ENCODE measurements at regions of chr14 and their contacts with region 1.

Region 1: DNA sequence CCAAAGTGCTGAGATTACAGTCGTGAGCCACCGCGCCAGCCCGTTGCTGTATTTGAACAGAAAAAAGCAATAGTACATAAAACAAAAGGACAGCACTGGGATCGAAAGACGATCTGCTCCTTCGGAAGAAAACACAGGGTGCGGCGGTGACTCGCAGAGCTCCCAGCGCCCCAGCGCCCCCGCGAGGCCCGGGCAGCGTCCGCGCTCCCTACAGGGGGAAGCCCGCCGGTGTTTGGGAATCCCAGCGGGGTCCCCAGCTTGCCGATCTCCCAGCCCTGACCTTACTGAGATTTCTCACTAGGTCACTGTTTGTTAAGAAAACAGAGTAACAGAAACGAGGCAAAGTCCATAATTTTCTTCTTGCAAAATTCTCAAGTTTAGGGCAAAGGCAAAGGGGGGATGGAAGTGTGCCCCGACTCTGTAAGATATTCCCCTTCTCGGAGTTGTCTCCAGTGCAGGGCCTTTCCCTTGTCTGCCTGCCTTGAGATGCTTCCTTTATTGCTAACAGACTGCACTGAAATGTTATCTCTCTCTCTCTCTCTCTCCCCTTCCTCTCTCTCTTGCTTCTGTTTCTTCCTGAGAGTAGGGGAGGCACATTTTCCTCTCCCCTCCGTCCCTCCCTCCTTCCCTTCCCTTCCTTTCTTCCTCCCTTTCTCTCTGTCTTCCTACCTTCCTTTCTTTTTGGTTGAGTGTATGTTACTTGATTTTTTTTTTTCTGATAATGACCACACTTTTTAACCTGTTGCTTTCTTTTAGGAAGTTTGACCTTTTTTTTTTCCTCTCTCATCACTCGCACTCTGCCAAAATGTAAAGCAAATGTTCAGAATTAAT is 91.9 kb downstream of the TMEM30B start:
- DNase-seq: peak; percentile 64 to 78
- ATAC-seq: peak; percentile 67 to 75
- H3K4me3 ChIP-seq: peak overlapping the region; percentile 47 to 64 (median 58)
- H3K27ac ChIP-seq: peak overlapping the region; percentile 79 to 94 (median 91)
- H3K4me1 ChIP-seq: peaks cover 39 to 55% of the 10 kb centered on the region in 2 donors
- H3K27me3 ChIP-seq: no peaks in the 10 kb centered on the region
- CTCF ChIP-seq: peak in 4 of 5 experiments; percentile 51 to 73 (median 70)
- POLR2A ChIP-seq: peak in 1 of 2 donors; percentile 8

Region 2: DNA sequence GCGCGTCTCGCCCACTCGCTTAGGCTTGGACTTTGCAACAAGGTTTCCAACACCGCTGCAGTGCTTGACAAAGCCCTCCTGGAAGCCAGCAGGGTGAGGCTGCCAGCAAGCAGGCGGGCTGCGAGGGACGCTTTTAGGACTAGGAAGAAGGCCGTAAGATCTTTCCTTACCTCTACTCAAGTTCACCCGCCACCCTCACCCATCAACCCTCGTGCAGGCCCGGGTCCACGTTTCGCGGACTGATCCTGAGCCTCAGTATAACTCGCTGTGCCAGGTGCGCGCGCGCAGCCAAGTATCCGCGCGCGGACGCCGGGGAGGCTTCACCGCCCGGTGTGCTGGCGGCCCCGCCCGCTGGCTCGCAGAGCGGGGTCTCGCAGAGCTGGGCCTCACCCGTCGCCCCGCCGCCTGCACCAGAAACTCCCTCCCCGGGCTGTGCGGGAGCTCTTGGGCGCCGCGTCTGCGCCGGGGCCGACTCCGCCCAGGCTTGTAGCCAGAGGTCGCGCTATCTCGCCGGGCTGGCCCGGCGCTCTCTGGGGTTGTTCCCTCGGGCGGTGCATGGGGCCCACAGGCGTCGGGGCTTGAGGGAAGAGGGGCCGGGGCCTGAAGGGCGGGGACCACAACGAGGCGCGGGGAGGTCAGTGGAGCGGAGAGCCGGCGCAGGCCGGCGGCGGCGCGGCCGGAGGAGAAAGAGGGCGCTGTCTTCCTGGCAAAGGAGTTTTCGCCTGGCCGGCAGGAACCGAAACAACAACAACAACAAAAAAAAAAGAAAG is 532.3 kb before region 1 on chr14:
- in situ Hi-C with region 1: no loop called
- intact Hi-C with region 1: loop called (anchors 5 kb)
- DNase-seq: peak; percentile 67 to 88
- ATAC-seq: peak; percentile 58 to 59
- H3K4me3 ChIP-seq: peak overlapping the region; percentile 73 to 90 (median 84)
- H3K27ac ChIP-seq: peak overlapping the region; percentile 93 to 98 (median 95)
- H3K4me1 ChIP-seq: peaks cover 26 to 34% of the 10 kb centered on the region in 2 donors
- H3K27me3 ChIP-seq: no peaks in the 10 kb centered on the region
- CTCF ChIP-seq: peak in 4 of 5 experiments; percentile 20 to 70 (median 49)
- POLR2A ChIP-seq: peak; percentile 33 to 50

Region 3: DNA sequence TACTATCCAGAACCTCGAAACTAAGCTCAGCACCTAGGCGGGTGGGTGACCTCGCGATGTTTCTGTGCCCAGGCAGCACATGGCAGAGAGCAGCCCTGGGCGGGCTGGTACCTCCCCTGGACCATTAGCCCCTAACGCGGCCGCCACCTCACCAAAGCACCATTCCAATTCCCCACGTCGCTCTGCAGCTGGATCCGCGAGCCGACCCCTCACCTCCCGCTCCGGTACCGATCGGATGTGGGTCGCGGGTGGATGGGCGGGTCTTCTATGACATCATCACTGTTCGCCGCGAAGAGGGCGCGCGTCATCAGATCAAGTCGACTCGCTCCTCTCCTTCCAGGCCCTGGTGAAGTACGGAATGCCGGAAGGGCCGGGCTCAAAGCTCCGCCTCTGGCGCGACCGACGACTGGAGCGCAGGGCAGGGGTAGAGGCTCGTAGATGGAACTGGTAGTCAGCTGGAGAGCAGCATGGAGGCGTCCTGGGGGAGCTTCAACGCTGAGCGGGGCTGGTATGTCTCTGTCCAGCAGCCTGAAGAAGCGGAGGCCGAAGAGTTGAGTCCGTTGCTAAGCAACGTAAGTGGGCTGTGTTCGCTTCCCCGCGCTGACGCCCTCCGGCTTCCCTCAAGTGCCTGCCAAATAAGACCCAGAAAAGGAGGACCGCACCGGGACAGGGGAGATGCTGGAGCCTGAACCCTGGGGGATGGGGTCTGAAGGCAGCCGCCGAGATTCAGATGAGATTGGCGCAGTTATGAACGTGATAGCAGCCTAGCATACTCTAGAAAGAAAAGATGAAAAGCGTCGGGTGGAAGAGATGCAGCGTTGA is 208.2 kb before region 1 on chr14 and contains the starts of genes SLC38A6 and TRMT5:
- in situ Hi-C with region 1: no loop called
- intact Hi-C with region 1: loop called (anchors 5 kb)
- DNase-seq: peak; percentile 92 to 94
- ATAC-seq: peak; percentile 86 to 92
- H3K4me3 ChIP-seq: peak within 1 kb of the TSS; percentile 69 to 90 (median 83)
- H3K27ac ChIP-seq: peak within 1 kb of the TSS; percentile 88 to 95 (median 90)
- H3K4me1 ChIP-seq: peaks cover 56 to 57% of the 10 kb centered on the region in 2 donors
- H3K27me3 ChIP-seq: no peaks in the 10 kb centered on the region
- CTCF ChIP-seq: peak in 1 of 5 experiments; percentile 30
- POLR2A ChIP-seq: peak; percentile 48 to 58
- total RNA-seq, gene SLC38A6: 4.0 to 22.6 (median 7.0) TPM
- total RNA-seq, gene TRMT5: 5.9 to 7.6 (median 6.5) TPM

Region 4: GRCh38 chr14:61106959-61107641 is 82.1 kb before region 1 on chr14:
- in situ Hi-C with region 1: loop called in 1 of 4 experiments (anchors 10 kb)
- intact Hi-C with region 1: loop called (anchors 5 kb)
- DNase-seq: no peak
- ATAC-seq: no peak
- H3K4me3 ChIP-seq: no peak overlapping the region
- H3K27ac ChIP-seq: peak overlapping the region in 3 of 4 donors; percentile 59 to 66 (median 59)
- H3K4me1 ChIP-seq: peaks cover 61 to 72% of the 10 kb centered on the region in 2 donors
- H3K27me3 ChIP-seq: no peaks in the 10 kb centered on the region
- CTCF ChIP-seq: peak in 4 of 5 experiments; percentile 9 to 36 (median 25)
- POLR2A ChIP-seq: no peak

Region 5: DNA sequence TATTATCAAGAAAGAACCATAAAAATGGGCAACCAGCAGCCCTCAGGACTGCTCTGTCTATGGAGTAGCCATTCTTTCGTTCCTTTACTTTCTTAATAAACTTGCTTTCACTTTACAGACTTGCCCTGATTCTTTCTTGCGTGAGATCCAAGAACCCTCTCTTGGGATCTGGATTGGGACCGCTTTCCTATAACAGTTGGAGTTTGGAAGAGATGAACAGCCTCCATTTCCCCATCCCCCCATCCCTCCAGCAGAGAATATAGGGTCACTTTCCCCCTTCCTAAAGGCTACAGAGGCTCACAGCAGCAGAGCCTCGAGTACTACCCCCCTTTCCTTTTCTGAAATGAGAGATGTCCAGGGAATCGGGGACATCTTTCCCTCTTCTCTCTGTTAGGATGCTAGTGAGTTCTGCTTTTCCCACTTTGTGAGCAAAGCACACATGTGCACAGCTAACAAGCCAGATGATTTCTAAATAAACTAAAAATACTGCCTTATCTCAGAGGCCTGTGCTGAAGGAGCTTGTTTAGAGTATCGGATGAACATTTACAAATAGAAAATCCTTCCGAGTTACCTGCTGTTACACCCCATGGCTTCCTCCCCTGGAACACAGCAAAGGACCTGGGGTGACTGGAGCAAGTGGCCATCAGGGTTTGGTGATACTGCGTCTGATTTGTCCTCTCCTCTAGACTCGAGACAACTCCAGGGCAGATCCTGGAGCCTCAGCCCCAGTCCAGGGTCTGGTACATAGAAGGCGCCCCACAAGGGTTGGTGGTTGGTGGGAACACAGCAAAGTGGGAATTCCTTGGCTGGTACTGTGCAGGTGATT is 63.9 kb before region 1 on chr14:
- in situ Hi-C with region 1: no loop called
- intact Hi-C with region 1: no loop called
- DNase-seq: peak; percentile 58 to 68
- ATAC-seq: peak; percentile 63 to 71
- H3K4me3 ChIP-seq: peak overlapping the region; percentile 15 to 31 (median 17)
- H3K27ac ChIP-seq: peak overlapping the region; percentile 94 to 99 (median 98)
- H3K4me1 ChIP-seq: peaks cover 73 to 78% of the 10 kb centered on the region in 2 donors
- H3K27me3 ChIP-seq: no peaks in the 10 kb centered on the region
- CTCF ChIP-seq: no peak
- POLR2A ChIP-seq: peak; percentile 68 to 76

Region 6: GRCh38 chr14:61355892-61356325 is 166.7 kb after region 1 on chr14:
- in situ Hi-C with region 1: no loop called
- intact Hi-C with region 1: no loop called
- DNase-seq: peak; percentile 5 to 27
- ATAC-seq: peak; percentile 83 to 86
- H3K4me3 ChIP-seq: no peak overlapping the region
- H3K27ac ChIP-seq: peak overlapping the region; percentile 42 to 64 (median 46)
- H3K4me1 ChIP-seq: peaks cover 12 to 19% of the 10 kb centered on the region in 2 donors
- H3K27me3 ChIP-seq: no peaks in the 10 kb centered on the region
- CTCF ChIP-seq: no peak
- POLR2A ChIP-seq: no peak